GM12878 (cell line): ENCODE measurements at regions of chr1 and their contacts with region 1.

Region 1: GRCh38 chr1:155540000-155540874 is 22.4 kb downstream of the ASH1L start:
- DNase-seq: no peak
- ATAC-seq: peak; percentile 58
- H3K4me3 ChIP-seq: peak overlapping the region; percentile 2; the same call in 1 of the 2 replicates
- H3K27ac ChIP-seq: peak overlapping the region; percentile 80
- H3K4me1 ChIP-seq: peaks cover 38% of the 10 kb centered on the region
- H3K27me3 ChIP-seq: no peaks in the 10 kb centered on the region
- CTCF ChIP-seq: no peak
- EP300 ChIP-seq: no peak
- POLR2A ChIP-seq: no peak
- RAD21 ChIP-seq: no peak

Region 2: DNA sequence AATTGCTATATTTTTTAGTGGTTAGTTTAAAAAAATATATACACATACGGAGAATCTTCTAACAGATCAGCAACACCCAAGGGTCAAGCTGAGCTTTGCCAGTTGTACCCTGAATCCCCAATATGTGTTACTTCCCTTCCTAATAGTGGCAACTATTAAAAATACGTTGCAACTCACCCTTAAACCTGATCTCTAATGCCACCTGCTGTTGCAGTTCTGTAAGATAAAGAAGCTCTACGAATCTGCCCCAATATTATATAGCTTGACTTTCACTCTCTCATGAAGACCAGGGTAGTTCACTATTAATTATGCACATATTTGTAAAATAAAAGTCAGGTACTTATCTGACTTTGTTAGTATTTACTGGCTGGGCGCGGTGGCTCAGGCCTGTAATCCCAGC is 36.0 kb before region 1 on chr1:
- CTCF ChIA-PET with region 1: interaction called, 5 read pairs
- POLR2A ChIA-PET with region 1: interaction called, 6 read pairs
- RAD21 ChIA-PET with region 1: interaction called, 8 read pairs
- SMC1A ChIA-PET with region 1: interaction called, 12 read pairs
- in situ Hi-C with region 1: no loop called
- intact Hi-C with region 1: no loop called
- DNase-seq: no peak
- ATAC-seq: peak; percentile 80
- H3K4me3 ChIP-seq: no peak overlapping the region
- H3K27ac ChIP-seq: peak overlapping the region; percentile 38; the same call in 1 of the 2 replicates
- H3K4me1 ChIP-seq: peaks cover 27% of the 10 kb centered on the region
- H3K27me3 ChIP-seq: no peaks in the 10 kb centered on the region
- CTCF ChIP-seq: peak; percentile 38 to 62 (median 52); a peak in 5 of 6 replicates
- EP300 ChIP-seq: no peak
- POLR2A ChIP-seq: no peak
- RAD21 ChIP-seq: peak; percentile 72

Region 3: GRCh38 chr1:155717041-155717440 is 176.8 kb after region 1 on chr1:
- CTCF ChIA-PET with region 1: no interaction called
- POLR2A ChIA-PET with region 1: no interaction called
- RAD21 ChIA-PET with region 1: no interaction called
- SMC1A ChIA-PET with region 1: no interaction called
- in situ Hi-C with region 1: no loop called
- intact Hi-C with region 1: no loop called
- DNase-seq: peak; percentile 56
- ATAC-seq: peak; percentile 96
- H3K4me3 ChIP-seq: no peak overlapping the region; the same call in 1 of the 2 replicates
- H3K27ac ChIP-seq: peak overlapping the region; percentile 23
- H3K4me1 ChIP-seq: peaks cover 12% of the 10 kb centered on the region
- H3K27me3 ChIP-seq: no peaks in the 10 kb centered on the region
- CTCF ChIP-seq: no peak
- EP300 ChIP-seq: no peak
- POLR2A ChIP-seq: no peak
- RAD21 ChIP-seq: no peak

Region 4: DNA sequence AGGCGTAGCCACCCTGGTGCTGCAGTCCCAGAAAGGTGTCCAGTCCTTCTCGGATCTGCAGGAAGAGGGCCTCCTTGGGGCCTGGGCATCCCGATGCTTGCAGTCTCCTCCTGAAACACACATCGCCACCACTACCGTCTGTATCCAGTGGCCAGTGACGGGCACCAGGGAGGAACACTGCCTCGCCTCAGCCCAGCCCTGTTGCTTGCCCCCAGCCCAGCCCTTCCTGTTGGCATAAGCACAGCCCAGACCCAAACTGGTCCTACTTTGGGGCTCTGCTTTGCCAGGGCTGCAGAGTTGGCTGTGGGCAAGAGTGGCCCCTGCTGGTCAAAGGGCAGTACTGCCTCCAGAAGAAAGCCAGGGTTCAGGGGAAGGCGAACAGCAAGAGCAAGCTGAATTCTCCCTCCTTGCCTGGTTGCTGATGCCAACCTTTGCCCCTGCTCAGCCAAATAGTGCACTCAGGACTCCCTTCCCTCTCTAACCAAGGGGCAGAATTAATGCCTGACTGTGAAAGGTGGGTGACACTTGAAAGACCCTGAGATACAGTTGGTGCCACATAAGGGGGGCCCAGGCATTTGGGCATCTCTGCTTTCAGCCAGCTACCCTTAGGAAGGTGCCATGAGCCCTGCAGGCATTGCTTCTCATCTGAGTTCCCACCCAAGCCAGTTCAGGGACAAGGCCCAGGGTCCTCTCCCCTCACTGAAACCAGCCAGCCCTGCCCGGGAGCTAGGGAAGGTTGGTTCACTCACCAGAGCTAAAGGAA is 449.2 kb after region 1 on chr1:
- CTCF ChIA-PET with region 1: no interaction called
- POLR2A ChIA-PET with region 1: no interaction called
- RAD21 ChIA-PET with region 1: no interaction called
- SMC1A ChIA-PET with region 1: no interaction called
- in situ Hi-C with region 1: no loop called
- intact Hi-C with region 1: no loop called
- DNase-seq: no peak
- ATAC-seq: peak; percentile 97
- H3K4me3 ChIP-seq: no peak overlapping the region
- H3K27ac ChIP-seq: peak overlapping the region; percentile 40; the same call in 1 of the 2 replicates
- H3K4me1 ChIP-seq: peaks cover 17% of the 10 kb centered on the region
- H3K27me3 ChIP-seq: no peaks in the 10 kb centered on the region
- CTCF ChIP-seq: peak; percentile 96 to 99 (median 99)
- EP300 ChIP-seq: no peak
- POLR2A ChIP-seq: no peak
- RAD21 ChIP-seq: peak; percentile 100

Region 5: DNA sequence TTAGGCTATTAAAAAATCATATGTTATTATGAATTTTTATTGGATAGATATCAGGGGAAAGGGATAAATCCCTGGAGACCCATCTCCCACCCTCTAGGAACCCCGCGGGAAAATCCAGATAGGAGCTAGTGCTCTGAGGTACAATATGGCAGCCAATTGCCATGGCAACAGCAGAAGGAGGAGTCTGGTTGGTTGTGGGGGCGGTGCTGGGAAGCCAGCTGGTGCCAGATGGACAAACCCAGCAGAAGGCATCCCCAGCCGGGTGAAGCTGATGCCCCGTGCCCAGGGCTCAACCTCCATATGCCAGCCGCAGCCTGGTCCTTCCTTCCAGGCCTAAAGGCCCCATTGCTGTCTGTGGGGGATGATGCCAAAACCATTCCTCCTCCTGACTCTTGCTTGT is 867.1 kb after region 1 on chr1:
- CTCF ChIA-PET with region 1: no interaction called
- POLR2A ChIA-PET with region 1: no interaction called
- RAD21 ChIA-PET with region 1: no interaction called
- SMC1A ChIA-PET with region 1: no interaction called
- in situ Hi-C with region 1: no loop called
- intact Hi-C with region 1: no loop called
- DNase-seq: no peak
- ATAC-seq: no peak
- H3K4me3 ChIP-seq: no peak overlapping the region
- H3K27ac ChIP-seq: no peak overlapping the region
- H3K4me1 ChIP-seq: no peaks in the 10 kb centered on the region
- H3K27me3 ChIP-seq: peaks cover 0 to 3% of the 10 kb centered on the region in 2 experiments; a peak in 1 of 4 replicates
- CTCF ChIP-seq: no peak
- EP300 ChIP-seq: no peak
- POLR2A ChIP-seq: no peak
- RAD21 ChIP-seq: no peak